Heart right ventricle (tissue), 16 donors: ENCODE measurements at regions of chr16 and their contacts with region 1.

Region 1: GRCh38 chr16:68085259-68086071 is at the start of gene NFATC3:
- DNase-seq: peak; percentile 99
- ATAC-seq: peak; percentile 87 to 94 (median 92)
- H3K4me3 ChIP-seq: peak within 1 kb of the TSS; percentile 84 to 93 (median 90)
- H3K27ac ChIP-seq: peak within 1 kb of the TSS; percentile 94 to 100 (median 98)
- H3K4me1 ChIP-seq: peaks cover 8 to 85% (median 60%) of the 10 kb centered on the region in 9 donors
- H3K27me3 ChIP-seq: no peaks in the 10 kb centered on the region
- CTCF ChIP-seq: peak in 3 of 9 donors; percentile 18 to 36 (median 22)
- total RNA-seq, gene NFATC3: 19.8 to 32.9 (median 25.1) TPM

Region 2: DNA sequence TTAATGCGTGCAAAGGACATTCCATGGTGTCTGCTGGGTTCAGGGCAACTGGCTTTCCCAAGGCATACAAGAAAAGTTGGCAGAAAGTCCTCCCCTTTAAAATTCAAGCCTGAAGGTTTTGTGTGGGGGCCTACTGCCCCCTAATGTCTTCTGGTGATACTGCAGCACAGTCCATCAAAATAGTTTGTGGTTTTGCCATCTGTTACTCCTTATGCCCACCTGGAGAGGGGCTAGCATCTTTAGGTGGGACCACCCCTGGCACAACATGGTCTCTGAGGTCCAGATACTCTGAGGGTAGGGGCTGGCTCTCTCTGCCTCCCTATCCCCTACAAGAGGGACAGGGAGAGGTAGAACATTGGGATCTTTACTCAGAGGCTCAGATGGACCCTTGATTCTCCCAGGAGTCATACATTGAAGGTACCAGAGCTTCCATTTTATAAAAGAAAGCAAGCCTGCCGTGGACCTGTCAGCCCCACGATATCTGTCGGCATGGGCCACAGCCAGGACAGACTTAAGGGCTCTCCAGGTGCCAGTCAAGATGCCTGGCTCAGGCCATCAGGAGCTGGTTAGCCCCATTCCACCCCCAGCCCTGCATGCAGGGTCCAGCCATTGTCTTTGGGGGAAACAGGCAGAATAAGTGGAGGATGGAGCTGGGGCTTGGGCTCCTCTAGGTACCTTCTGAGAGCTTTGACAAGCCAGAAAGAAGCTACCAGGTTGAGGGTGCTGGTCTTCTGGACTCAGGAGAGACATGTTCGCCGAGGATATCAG is 144.2 kb after region 1 on chr16:
- intact Hi-C with region 1: loop called in 7 of 10 experiments (anchors 5 to 10 kb)
- DNase-seq: no peak
- ATAC-seq: peak; percentile 11 to 57 (median 38)
- H3K4me3 ChIP-seq: no peak overlapping the region
- H3K27ac ChIP-seq: peak overlapping the region in 1 of 10 donors; percentile 43
- H3K4me1 ChIP-seq: peaks cover 3 to 33% (median 23%) of the 10 kb centered on the region in 9 donors
- H3K27me3 ChIP-seq: no peaks in the 10 kb centered on the region
- CTCF ChIP-seq: peak; percentile 85 to 94 (median 91)

Region 3: GRCh38 chr16:68237243-68238028 is 152.0 kb after region 1 on chr16:
- intact Hi-C with region 1: loop called in 1 of 10 experiments (anchors 10 kb)
- DNase-seq: peak; percentile 97 to 98
- ATAC-seq: peak; percentile 90 to 96 (median 94)
- H3K4me3 ChIP-seq: peak overlapping the region; percentile 20 to 67 (median 60)
- H3K27ac ChIP-seq: peak overlapping the region; percentile 49 to 94 (median 88)
- H3K4me1 ChIP-seq: peaks cover 9 to 47% (median 30%) of the 10 kb centered on the region in 9 donors
- H3K27me3 ChIP-seq: peaks cover 0 to 16% (median 0%) of the 10 kb centered on the region in 7 donors
- CTCF ChIP-seq: peak in 2 of 9 donors; percentile 2 to 6